PC-9 (cell line): ENCODE measurements at regions of chr6 and their contacts with region 1.

Region 1: GRCh38 chr6:46848684-46849360 is 55.6 kb downstream of the MEP1A start:
- DNase-seq: peak; percentile 76 to 85
- H3K4me3 ChIP-seq: no peak overlapping the region
- H3K27ac ChIP-seq: 0 out of 2 replicates have a peak overlapping the region, but pooled peaks have one; percentile 12
- H3K4me1 ChIP-seq: peaks cover 37% of the 10 kb centered on the region
- H3K27me3 ChIP-seq: no peaks in the 10 kb centered on the region
- CTCF ChIP-seq: peak; percentile 96

Region 2: DNA sequence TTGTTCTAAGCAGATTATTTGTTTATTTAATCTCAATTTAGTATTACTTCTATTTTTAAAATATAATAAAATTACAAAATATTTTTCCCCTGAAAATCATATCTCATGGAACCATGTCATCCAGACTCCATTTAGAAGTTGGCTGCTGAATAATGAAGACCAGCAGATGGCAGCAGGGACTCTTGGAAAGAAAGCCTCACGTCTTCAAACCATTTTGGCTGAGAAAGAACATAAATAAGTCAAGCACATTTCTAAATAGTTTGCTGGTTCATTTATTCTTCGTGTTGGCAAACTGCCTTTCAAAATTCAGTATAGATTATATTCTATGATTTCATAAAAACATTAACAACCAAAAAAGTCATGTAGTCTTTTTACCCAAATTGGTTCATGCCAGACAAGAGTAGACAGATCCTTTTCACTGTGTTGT is 429.2 kb before region 1 on chr6:
- CTCF ChIA-PET with region 1: no interaction called
- POLR2A ChIA-PET with region 1: no interaction called
- intact Hi-C with region 1: loop called (anchors 1 kb)
- DNase-seq: peak in 1 of 2 experiments; percentile 48
- H3K4me3 ChIP-seq: no peak overlapping the region
- H3K27ac ChIP-seq: no peak overlapping the region
- H3K4me1 ChIP-seq: peaks cover 11% of the 10 kb centered on the region; the same call in 1 of the 2 replicates
- H3K27me3 ChIP-seq: no peaks in the 10 kb centered on the region
- CTCF ChIP-seq: peak; percentile 83

Region 3: GRCh38 chr6:46925563-46926253 is 76.9 kb after region 1 on chr6:
- CTCF ChIA-PET with region 1: no interaction called
- POLR2A ChIA-PET with region 1: no interaction called
- intact Hi-C with region 1: loop called (anchors 5 kb)
- DNase-seq: peak; percentile 71 to 98
- H3K4me3 ChIP-seq: peak overlapping the region; percentile 9; the same call in 1 of the 2 replicates
- H3K27ac ChIP-seq: peak overlapping the region; percentile 95
- H3K4me1 ChIP-seq: peaks cover 66% of the 10 kb centered on the region
- H3K27me3 ChIP-seq: no peaks in the 10 kb centered on the region
- CTCF ChIP-seq: no peak

Region 4: GRCh38 chr6:46983007-46983411 is 134.2 kb after region 1 on chr6:
- CTCF ChIA-PET with region 1: interaction called, 3 read pairs
- POLR2A ChIA-PET with region 1: no interaction called
- intact Hi-C with region 1: loop called (anchors 1 kb)
- DNase-seq: peak; percentile 14 to 98
- H3K4me3 ChIP-seq: no peak overlapping the region
- H3K27ac ChIP-seq: peak overlapping the region; percentile 70
- H3K4me1 ChIP-seq: peaks cover 61% of the 10 kb centered on the region
- H3K27me3 ChIP-seq: no peaks in the 10 kb centered on the region
- CTCF ChIP-seq: peak; percentile 36; the same call in 1 of the 2 replicates

Region 5: GRCh38 chr6:47034919-47035318 is 186.1 kb after region 1 on chr6:
- CTCF ChIA-PET with region 1: interaction called, 3 read pairs
- POLR2A ChIA-PET with region 1: interaction called, 10 read pairs
- intact Hi-C with region 1: no loop called
- DNase-seq: peak; percentile 83 to 99
- H3K4me3 ChIP-seq: peak overlapping the region; percentile 41; the same call in 1 of the 2 replicates
- H3K27ac ChIP-seq: peak overlapping the region; percentile 98
- H3K4me1 ChIP-seq: peaks cover 68% of the 10 kb centered on the region
- H3K27me3 ChIP-seq: no peaks in the 10 kb centered on the region
- CTCF ChIP-seq: no peak

Region 6: DNA sequence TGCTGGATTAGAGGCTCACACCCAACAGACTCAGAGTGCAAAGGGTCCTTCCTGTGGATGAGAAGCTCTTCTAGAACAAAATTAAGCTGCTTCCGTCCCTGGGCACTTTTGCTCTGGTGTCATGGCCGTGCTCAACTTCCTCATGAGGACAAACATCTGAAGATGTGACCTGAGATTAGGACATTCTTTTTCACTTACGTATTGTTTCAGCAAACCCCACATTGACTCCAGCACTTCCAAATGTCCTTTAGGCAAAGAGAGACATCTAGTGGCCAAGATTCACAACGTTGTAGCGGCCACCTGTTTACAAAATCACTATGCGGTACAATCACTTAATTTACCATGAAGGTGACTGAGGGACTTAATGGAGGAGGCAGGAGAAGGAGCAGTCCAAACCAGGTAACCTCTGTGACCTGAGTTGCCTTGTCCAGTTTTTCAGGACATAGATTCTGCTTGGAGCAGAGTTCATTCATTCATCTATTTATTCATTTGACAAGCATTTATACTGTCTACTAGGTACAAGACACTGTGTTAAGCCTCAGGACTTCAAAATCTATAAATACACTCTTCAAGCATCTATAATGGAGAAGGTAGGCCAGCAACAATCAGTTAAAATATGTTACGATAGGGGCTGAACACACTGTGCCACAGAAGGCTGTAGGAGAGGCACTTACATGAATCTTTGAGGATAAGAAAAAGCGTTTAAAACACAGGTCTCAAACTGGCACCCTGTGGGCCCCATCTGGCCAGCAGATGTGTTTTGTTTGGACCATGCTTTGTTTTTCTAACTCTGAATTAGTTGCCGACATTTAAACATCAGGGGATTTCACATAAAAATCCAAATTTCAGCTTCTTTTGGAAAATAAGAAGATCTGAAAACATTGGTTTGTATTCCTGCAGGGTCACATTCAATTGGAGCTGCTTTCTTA is 198.9 kb after region 1 on chr6:
- CTCF ChIA-PET with region 1: interaction called, 5 read pairs
- POLR2A ChIA-PET with region 1: no interaction called
- intact Hi-C with region 1: loop called (anchors 1 kb)
- DNase-seq: peak; percentile 72 to 99
- H3K4me3 ChIP-seq: no peak overlapping the region; the same call in 1 of the 2 replicates
- H3K27ac ChIP-seq: peak overlapping the region; percentile 98
- H3K4me1 ChIP-seq: peaks cover 60% of the 10 kb centered on the region
- H3K27me3 ChIP-seq: no peaks in the 10 kb centered on the region
- CTCF ChIP-seq: peak; percentile 80